ENCODE measurements at regions of chr3 and their contacts with region 1.

Region 1: GRCh38 chr3:30496066-30496966 is 110.1 kb upstream of the TGFBR2 start:
- DNase-seq: no peak
- H3K4me3 Mint-ChIP-seq: no peak overlapping the region
- H3K27ac Mint-ChIP-seq: no peak overlapping the region
- H3K4me1 Mint-ChIP-seq: peaks cover 53% of the 10 kb centered on the region
- H3K27me3 Mint-ChIP-seq: no peaks in the 10 kb centered on the region
- CTCF ChIP-seq: no peak

Region 2: DNA sequence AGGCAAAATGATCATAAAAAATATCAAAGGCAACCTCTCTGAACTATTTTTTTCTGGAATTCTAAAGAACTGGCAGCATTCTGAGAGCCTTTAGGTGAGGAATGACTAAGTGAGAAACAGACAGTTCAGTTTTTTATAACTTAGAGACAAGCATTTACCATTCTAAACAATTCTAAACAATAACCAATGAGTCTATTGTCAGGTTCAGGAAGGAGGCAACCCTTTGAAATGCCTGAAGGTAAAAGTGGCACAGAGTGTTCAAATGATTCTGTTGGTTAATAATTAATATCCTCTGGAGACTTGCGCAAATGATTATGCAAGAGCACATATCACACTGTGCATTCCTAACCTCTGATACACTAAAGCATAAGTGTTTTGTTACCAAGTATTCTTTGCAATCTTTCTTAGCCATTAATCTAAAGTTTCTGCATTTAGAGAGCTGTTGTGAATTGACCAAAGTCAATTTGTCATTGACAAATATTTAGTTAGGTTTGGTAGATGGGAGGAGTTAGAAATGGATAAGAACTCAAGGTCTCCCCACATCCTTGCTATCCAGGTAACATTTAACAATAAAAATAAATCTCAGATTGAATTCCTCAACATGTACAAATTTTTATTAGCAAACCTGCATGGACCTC is 100.9 kb after region 1 on chr3:
- CTCF ChIA-PET with region 1: interaction called, 3 read pairs
- intact Hi-C with region 1: loop called (anchors 5 kb)
- DNase-seq: peak; percentile 45
- H3K4me3 Mint-ChIP-seq: no peak overlapping the region
- H3K27ac Mint-ChIP-seq: peak overlapping the region; percentile 91
- H3K4me1 Mint-ChIP-seq: peaks cover 48% of the 10 kb centered on the region
- H3K27me3 Mint-ChIP-seq: no peaks in the 10 kb centered on the region
- CTCF ChIP-seq: no peak